Stomach (tissue), 19 donors: ENCODE measurements at regions of chr2 and their contacts with region 1.

Region 1: DNA sequence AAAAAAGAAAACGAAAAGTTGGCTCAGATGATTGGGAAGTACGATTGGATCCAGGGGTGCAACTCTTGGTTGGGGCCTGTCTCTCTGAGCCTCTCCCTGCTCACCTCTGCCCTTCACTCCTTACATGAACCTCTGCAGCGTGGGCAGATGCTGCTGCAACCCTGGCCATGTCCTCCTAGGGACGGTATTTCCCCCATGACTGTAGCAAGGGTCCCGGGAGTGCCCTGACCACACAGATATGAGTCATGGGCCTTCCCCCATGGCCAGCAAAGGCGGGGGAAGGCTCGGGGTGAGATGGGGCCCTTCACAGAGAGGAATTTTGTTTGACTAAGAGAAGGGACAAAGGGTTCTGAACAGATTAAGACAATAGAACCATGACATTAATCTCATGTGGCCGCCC is 129.0 kb downstream of the NCK2 start:
- DNase-seq: peak in 1 of 2 donors; percentile 36
- H3K4me3 ChIP-seq: peak overlapping the region in 1 of 4 donors; percentile 6
- H3K27ac ChIP-seq: peak overlapping the region in 1 of 5 donors; percentile 7
- H3K4me1 ChIP-seq: peaks cover 16 to 81% (median 47%) of the 10 kb centered on the region in 4 donors
- H3K27me3 ChIP-seq: no peaks in the 10 kb centered on the region
- CTCF ChIP-seq: no peak
- EP300 ChIP-seq: no peak
- POLR2A ChIP-seq: no peak

Region 2: GRCh38 chr2:105510761-105511610 is 362.7 kb before region 1 on chr2:
- intact Hi-C with region 1: no loop called
- DNase-seq: no peak
- H3K4me3 ChIP-seq: no peak overlapping the region
- H3K27ac ChIP-seq: peak overlapping the region in 3 of 5 donors; percentile 45 to 56 (median 52)
- H3K4me1 ChIP-seq: peaks cover 9 to 21% (median 14%) of the 10 kb centered on the region in 4 donors
- H3K27me3 ChIP-seq: no peaks in the 10 kb centered on the region
- CTCF ChIP-seq: no peak
- EP300 ChIP-seq: no peak
- POLR2A ChIP-seq: no peak

Region 3: GRCh38 chr2:105725388-105725787 is 148.3 kb before region 1 on chr2:
- intact Hi-C with region 1: no loop called
- DNase-seq: no peak
- H3K4me3 ChIP-seq: no peak overlapping the region
- H3K27ac ChIP-seq: no peak overlapping the region
- H3K4me1 ChIP-seq: no peaks in the 10 kb centered on the region
- H3K27me3 ChIP-seq: no peaks in the 10 kb centered on the region
- CTCF ChIP-seq: no peak
- EP300 ChIP-seq: no peak
- POLR2A ChIP-seq: no peak

Region 4: GRCh38 chr2:105969555-105969954 is 95.8 kb after region 1 on chr2:
- intact Hi-C with region 1: no loop called
- DNase-seq: no peak
- H3K4me3 ChIP-seq: no peak overlapping the region
- H3K27ac ChIP-seq: no peak overlapping the region
- H3K4me1 ChIP-seq: no peaks in the 10 kb centered on the region
- H3K27me3 ChIP-seq: no peaks in the 10 kb centered on the region
- CTCF ChIP-seq: no peak
- EP300 ChIP-seq: no peak
- POLR2A ChIP-seq: no peak

Region 5: GRCh38 chr2:106011380-106011779 is 137.7 kb after region 1 on chr2:
- intact Hi-C with region 1: no loop called
- DNase-seq: peak in 1 of 2 donors; percentile 34
- H3K4me3 ChIP-seq: no peak overlapping the region
- H3K27ac ChIP-seq: no peak overlapping the region
- H3K4me1 ChIP-seq: no peaks in the 10 kb centered on the region
- H3K27me3 ChIP-seq: no peaks in the 10 kb centered on the region
- CTCF ChIP-seq: no peak
- EP300 ChIP-seq: no peak
- POLR2A ChIP-seq: no peak

Region 6: DNA sequence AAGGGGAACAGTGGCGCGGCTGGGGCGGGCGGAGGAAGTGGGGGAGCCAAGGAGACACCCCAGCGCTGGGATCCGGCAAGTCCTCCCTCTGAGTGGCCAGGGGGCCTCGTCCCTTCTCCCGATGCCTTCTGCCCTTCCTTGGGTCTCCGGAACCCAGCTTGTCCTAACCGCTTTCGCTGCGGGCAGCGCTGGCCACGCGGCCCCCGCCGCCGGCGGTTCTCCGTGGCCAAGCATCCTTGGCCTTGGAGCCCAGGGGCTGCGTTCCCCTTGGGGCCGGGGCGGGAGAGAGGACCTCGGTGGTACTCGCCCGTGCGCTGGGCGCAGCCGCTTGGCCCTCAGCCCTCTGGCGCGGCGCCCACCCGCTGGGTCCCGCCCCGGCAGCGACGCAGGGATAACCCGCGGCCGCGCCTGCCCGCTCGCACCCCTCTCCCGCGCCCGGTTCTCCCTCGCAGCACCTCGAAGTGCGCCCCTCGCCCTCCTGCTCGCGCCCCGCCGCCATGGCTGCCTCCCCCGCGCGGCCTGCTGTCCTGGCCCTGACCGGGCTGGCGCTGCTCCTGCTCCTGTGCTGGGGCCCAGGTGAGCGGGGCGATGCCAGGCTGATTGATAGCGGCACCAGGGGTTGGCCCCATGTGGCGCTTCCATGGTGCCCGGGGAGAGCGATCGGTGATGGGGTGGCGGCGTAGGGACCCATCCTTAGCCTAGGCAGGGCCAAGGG is 191.7 kb after region 1 on chr2:
- intact Hi-C with region 1: loop called (anchors 10 kb)
- DNase-seq: peak in 1 of 2 donors; percentile 74
- H3K4me3 ChIP-seq: peak overlapping the region; percentile 49 to 56 (median 54)
- H3K27ac ChIP-seq: peak overlapping the region; percentile 17 to 83 (median 59)
- H3K4me1 ChIP-seq: peaks cover 4 to 21% (median 16%) of the 10 kb centered on the region in 4 donors
- H3K27me3 ChIP-seq: peaks cover 0 to 30% (median 18%) of the 10 kb centered on the region in 3 donors
- CTCF ChIP-seq: no peak
- EP300 ChIP-seq: no peak
- POLR2A ChIP-seq: no peak